Psoas muscle (tissue), 8 donors: ENCODE measurements at regions of chr7 and their contacts with region 1.

Region 1: GRCh38 chr7:151059367-151060112 is at the start of gene SLC4A2:
- DNase-seq: peak; percentile 88 to 90
- ATAC-seq: peak; percentile 59 to 75 (median 66)
- H3K4me3 ChIP-seq: peak within 1 kb of the TSS; percentile 85
- H3K27ac ChIP-seq: peak within 1 kb of the TSS; percentile 99
- H3K4me1 ChIP-seq: peaks cover 34% of the 10 kb centered on the region
- H3K27me3 ChIP-seq: no peaks in the 10 kb centered on the region
- CTCF ChIP-seq: peak; percentile 46
- total RNA-seq, gene SLC4A2: 26.5 to 36.0 (median 31.3) TPM

Region 2: DNA sequence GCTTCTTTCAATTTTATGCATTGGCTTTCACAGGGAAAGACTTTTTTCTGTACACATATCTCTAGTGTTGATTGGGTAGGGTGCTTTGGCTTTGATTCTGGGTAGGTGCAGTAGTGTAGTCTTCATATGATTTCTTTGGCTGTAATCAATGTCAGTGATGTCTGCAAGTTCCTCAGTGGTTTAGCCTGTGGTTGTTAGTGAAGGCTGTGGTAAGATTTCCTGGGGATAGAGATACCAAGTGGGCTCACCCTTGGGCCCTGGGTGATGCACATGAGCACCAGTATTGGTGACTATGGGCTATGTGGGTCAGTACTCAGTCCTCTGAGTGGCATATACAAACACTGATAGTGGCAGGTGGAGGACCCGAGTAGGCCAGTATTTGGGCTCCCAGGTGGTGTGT is 596.1 kb before region 1 on chr7:
- intact Hi-C with region 1: no loop called
- DNase-seq: no peak
- ATAC-seq: no peak
- H3K4me3 ChIP-seq: no peak overlapping the region
- H3K27ac ChIP-seq: no peak overlapping the region
- H3K4me1 ChIP-seq: no peaks in the 10 kb centered on the region
- H3K27me3 ChIP-seq: no peaks in the 10 kb centered on the region
- CTCF ChIP-seq: no peak

Region 3: DNA sequence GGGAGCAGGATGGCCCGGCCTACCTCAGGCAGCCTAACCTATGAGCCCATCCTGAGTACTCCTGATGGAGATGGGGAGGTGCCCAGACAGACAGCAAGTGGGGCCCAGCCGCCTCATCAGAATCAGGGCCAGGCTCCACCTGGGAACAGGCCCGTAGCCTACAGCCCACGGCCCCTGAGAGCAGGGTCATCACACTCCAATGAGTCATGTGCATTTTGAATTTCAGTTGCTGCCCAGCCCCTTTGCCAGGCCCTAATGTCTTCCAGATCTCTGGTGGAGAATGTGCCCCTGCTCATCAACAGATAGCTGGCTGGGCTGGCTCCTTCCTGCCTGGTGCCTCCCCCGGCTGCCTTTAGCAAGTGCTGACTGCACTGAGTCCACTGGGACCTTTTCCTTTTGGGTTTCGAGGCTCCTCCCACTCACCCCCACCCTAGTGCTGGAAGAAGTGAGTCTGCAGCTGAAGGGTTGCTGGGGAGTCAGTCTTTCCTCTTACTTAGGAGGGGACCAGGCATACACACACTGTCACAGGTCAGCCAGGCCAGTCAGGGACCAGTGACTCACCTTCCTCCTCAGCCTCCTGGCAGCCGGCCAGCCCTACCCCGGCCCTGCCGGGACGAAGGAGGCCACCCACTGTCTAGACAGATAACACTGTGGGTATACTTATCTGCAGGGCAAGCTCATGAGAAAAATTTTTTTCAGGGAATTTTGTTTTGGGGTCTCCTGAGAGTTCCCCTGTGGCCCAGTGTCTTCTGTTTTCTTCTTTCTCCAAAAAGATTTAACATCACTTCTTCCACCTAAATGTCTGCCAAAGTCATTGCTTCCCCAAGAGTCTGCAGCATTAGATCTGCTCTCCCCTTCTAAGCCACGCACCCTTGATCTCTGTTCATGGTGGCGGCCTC is 20.3 kb before region 1 on chr7:
- intact Hi-C with region 1: no loop called
- DNase-seq: peak; percentile 78
- ATAC-seq: peak; percentile 52 to 71 (median 64)
- H3K4me3 ChIP-seq: no peak overlapping the region
- H3K27ac ChIP-seq: peak overlapping the region; percentile 15
- H3K4me1 ChIP-seq: peaks cover 24% of the 10 kb centered on the region
- H3K27me3 ChIP-seq: no peaks in the 10 kb centered on the region
- CTCF ChIP-seq: no peak

Region 4: DNA sequence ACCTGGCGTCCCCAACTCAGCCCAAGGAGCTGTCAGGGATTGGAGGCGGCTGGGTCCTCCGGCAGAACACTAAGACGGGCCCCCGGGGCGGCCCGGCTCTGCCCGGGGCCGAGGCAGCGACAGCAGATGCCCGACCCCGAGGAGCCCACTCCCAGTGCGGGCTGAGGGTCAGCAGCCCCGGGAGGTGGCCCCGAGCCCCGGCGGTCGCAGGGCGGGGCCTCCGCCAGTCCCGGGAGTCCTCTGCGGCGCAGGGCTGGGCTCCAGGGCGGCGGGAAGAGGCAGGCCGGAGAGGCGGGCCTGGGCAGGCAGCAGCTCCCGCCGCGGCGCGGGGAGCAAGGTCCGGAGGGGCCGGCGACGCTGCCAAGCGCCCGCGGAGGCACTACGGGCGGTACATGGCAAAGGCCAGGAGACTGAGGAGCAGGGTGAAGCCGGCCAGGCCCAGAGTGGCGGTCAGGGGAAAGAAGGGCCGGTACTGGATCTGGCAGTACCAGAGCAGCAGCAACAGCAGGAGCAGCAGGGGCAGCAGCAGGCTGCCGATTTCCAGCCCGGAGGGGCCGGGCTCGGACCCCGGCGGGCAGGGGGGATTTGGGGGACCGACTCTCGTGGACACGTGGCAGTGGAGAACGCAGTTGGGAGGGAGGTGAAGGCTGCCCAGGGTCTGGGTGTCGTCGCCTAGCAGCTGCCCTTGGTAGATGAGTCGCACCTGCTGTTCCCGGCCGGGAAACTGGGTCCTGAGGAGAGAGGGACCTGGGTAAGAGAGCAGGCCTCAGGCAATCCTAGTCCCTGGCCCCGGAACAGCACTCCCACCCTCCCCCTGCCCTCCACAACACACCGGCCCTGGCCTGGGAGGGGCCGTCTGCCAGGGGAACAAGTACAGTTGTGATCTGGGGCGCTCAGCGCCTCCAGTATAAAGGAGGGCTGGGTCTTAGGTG is 21.9 kb after region 1 on chr7:
- intact Hi-C with region 1: loop called in 1 of 2 experiments (anchors 1 kb)
- DNase-seq: peak in 1 of 2 donors; percentile 57
- ATAC-seq: peak in 2 of 4 donors; percentile 2 to 10
- H3K4me3 ChIP-seq: peak overlapping the region; percentile 91
- H3K27ac ChIP-seq: peak overlapping the region; percentile 89
- H3K4me1 ChIP-seq: peaks cover 48% of the 10 kb centered on the region
- H3K27me3 ChIP-seq: no peaks in the 10 kb centered on the region
- CTCF ChIP-seq: no peak

Region 5: GRCh38 chr7:151172273-151173141 is 113.0 kb after region 1 on chr7:
- intact Hi-C with region 1: no loop called
- DNase-seq: peak; percentile 78 to 90
- ATAC-seq: peak; percentile 78 to 86 (median 82)
- H3K4me3 ChIP-seq: no peak overlapping the region
- H3K27ac ChIP-seq: no peak overlapping the region
- H3K4me1 ChIP-seq: peaks cover 22% of the 10 kb centered on the region
- H3K27me3 ChIP-seq: no peaks in the 10 kb centered on the region
- CTCF ChIP-seq: peak; percentile 100